Transverse colon (tissue), 4 donors: ENCODE measurements at regions of chr4 and their contacts with region 1.

Region 1: DNA sequence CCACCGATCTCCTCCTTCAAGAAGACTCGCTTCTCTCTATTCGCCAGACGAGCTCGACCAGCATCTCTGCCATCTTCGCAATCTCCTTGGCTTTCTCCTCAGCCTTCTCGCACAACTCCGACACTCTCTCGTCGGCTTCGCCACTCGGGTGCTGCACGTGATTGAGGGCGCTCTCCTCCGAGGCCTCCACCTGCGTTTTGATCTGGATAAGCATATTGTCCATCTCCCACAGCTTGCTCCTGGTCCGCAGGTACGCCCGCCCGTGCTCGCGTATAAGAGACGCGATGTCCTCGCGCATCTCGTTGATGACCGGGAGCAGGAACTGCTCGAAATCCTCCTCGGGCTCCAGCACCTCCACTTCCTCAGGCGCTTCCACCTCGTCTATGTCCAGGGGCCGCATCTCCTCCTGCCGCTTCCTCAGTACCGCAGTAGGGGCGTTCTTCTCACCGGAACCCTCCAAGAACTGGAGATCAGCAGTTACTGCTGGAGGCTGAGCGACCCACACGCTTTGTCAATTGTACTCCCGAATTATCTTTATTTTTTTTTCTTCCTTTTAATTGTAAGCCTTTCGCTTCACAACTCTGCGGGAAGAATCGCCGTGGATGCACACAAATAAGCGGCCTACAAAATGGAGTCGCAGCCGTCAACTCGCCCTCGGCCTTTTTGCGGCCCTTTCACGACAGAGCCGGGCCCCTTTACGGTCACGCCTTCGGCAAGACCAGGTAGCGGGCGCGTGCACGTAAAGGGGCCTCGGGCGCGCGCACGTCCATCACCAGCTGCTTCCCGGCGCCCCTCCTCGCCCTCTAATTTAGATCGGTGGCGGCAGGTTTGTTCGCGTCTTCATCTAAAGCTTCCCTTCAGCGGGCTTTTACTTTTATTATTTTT is at the start of gene MRFAP1L1:
- DNase-seq: peak; percentile 97
- H3K4me3 ChIP-seq: peak within 1 kb of the TSS; percentile 60 to 82 (median 74)
- H3K27ac ChIP-seq: peak within 1 kb of the TSS; percentile 83 to 92 (median 90)
- H3K4me1 ChIP-seq: peaks cover 25 to 42% (median 29%) of the 10 kb centered on the region in 4 donors
- H3K27me3 ChIP-seq: no peaks in the 10 kb centered on the region
- CTCF ChIP-seq: peak in 2 of 5 experiments; percentile 20 to 22
- EP300 ChIP-seq: no peak
- POLR2A ChIP-seq: peak; percentile 44
- total RNA-seq, gene MRFAP1L1: 18.3 to 51.0 (median 30.3) TPM

Region 2: DNA sequence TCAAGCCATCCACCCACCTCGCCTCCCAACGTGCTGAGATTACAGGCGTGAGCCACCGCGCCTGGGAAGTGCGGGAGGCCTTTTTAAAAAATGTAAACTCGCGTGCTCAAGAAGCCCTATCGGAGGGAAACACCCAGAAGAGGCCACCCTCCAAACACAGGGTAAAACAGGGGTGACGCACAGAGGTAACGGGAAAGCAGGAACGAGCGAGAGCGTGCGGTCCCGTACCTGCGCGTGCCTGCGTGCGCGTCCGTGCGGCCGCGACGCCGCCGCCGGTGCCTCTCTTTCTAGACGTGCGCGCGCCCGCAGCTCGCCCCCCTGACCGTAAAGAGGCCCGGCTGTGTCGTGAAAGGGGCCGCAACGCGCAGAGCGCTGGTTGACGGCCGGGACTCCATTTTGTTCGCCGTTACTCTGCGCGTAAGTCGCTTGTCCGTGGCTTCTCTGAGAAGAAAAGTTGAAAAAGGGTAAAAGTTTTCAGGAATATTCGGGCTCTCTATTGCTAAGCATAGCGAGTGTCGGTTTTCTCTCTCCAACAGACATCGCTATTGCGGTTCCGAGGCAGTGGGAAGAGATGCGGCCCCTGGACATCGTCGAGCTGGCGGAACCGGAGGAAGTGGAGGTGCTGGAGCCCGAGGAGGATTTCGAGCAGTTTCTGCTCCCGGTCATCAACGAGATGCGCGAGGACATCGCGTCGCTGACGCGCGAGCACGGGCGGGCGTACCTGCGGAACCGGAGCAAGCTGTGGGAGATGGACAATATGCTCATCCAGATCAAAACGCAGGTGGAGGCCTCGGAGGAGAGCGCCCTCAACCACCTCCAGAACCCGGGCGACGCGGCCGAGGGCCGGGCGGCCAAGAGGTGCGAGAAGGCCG is 68.9 kb before region 1 on chr4 and contains the start of gene MRFAP1:
- in situ Hi-C with region 1: no loop called
- intact Hi-C with region 1: loop called (anchors 10 kb)
- DNase-seq: peak; percentile 95
- H3K4me3 ChIP-seq: peak within 1 kb of the TSS; percentile 64 to 90 (median 73)
- H3K27ac ChIP-seq: peak within 1 kb of the TSS; percentile 96 to 98 (median 96)
- H3K4me1 ChIP-seq: peaks cover 10 to 28% (median 22%) of the 10 kb centered on the region in 4 donors
- H3K27me3 ChIP-seq: no peaks in the 10 kb centered on the region
- CTCF ChIP-seq: no peak
- EP300 ChIP-seq: no peak
- POLR2A ChIP-seq: peak; percentile 81
- total RNA-seq, gene MRFAP1: 96.3 to 229 (median 125) TPM

Region 3: DNA sequence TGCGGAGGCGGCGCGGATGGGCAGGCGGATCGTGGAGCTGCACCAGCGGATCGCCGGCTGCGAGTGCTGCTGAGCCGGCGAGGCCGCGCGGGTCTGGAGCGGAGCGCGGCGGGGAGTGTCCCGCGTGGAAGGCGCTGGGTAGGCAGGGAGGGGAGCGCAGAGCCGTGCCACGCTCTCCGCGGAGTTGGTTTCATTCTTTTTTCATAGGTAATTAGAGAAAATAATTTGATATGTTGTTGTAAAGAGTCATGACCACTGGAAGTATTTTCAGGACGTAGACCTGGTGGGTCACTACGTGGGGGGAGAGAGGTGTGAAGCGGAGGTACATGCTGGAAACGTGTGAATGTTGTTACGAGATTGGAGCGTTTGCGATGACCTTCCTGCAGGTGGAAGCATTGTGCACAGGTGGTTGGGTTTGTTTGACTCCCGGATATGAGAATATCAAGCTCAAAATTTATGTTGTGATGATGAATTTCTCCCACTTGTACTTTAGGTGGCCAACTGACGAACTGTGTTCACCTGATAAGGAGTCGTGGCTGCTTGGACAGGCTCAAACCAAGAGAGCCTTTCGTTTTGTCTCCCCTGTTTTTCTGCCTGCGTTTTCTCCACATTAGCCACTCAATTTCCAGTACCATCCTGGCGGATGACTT is 34.8 kb before region 1 on chr4:
- in situ Hi-C with region 1: loop called in 1 of 4 experiments (anchors 5 kb)
- intact Hi-C with region 1: no loop called
- DNase-seq: peak; percentile 64
- H3K4me3 ChIP-seq: peak overlapping the region; percentile 48 to 77 (median 68)
- H3K27ac ChIP-seq: peak overlapping the region; percentile 88 to 95 (median 91)
- H3K4me1 ChIP-seq: peaks cover 21 to 40% (median 26%) of the 10 kb centered on the region in 4 donors
- H3K27me3 ChIP-seq: no peaks in the 10 kb centered on the region
- CTCF ChIP-seq: peak; percentile 43 to 66 (median 45)
- EP300 ChIP-seq: no peak
- POLR2A ChIP-seq: no peak

Region 4: GRCh38 chr4:6885951-6886557 is 176.6 kb after region 1 on chr4:
- in situ Hi-C with region 1: loop called in 1 of 4 experiments (anchors 25 kb)
- intact Hi-C with region 1: no loop called
- DNase-seq: no peak
- H3K4me3 ChIP-seq: no peak overlapping the region
- H3K27ac ChIP-seq: peak overlapping the region in 3 of 4 donors; percentile 34 to 55 (median 34)
- H3K4me1 ChIP-seq: peaks cover 0 to 10% (median 7%) of the 10 kb centered on the region in 4 donors
- H3K27me3 ChIP-seq: no peaks in the 10 kb centered on the region
- CTCF ChIP-seq: peak in 1 of 5 experiments; percentile 18
- EP300 ChIP-seq: no peak
- POLR2A ChIP-seq: no peak

Region 5: DNA sequence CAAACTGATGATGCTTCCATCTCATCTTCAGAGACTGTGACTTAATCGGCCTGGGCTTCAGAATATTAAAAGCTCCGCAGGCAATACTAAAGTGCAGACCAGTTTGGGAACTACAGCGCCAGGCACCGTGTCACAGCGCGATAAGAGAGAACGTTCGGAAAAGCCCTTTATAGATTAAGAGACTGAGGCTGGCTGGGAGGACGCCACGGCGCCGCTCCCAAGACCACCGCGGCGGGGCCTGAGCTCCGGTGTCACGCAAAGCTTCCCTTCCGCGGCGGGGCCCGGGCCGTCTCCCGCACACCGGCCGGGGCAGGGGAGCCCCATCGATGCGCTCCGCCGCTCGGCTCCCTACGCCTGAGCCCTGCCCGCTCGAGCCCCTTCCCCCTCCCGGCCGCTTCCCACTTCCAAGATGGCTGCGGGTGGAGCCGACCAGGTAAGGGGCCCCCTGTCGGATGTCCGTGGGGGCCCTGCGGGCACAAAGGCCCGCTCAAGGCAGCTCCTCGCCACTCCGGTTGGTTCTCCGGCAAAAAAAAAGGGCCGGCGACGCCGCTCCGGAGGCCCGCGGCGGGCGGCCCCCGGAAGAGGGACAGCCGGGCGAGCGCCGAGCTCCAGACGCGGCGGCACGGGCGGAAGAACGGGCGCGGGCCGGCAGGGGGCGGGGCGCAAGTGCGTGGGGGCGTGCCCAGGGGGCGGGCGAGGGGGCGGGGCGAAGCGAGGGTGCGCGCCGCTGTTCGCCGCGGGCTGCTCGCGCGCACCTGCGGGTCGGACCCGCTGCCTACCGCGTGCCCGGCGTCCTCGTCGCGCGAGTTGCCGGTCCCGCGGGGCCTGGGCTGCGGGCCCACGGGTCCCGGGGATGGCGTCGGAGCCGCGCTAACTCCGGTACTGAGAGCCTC is 199.8 kb after region 1 on chr4 and contains the start of gene TBC1D14:
- in situ Hi-C with region 1: no loop called
- intact Hi-C with region 1: loop called (anchors 10 kb)
- DNase-seq: peak; percentile 91
- H3K4me3 ChIP-seq: peak within 1 kb of the TSS; percentile 75 to 91 (median 86)
- H3K27ac ChIP-seq: peak within 1 kb of the TSS; percentile 97 to 99 (median 99)
- H3K4me1 ChIP-seq: peaks cover 6 to 49% (median 34%) of the 10 kb centered on the region in 4 donors
- H3K27me3 ChIP-seq: peaks cover 3% of the 10 kb centered on the region
- CTCF ChIP-seq: peak in 3 of 5 experiments; percentile 8 to 44 (median 15)
- EP300 ChIP-seq: no peak
- POLR2A ChIP-seq: peak; percentile 62
- total RNA-seq, gene TBC1D14: 42.6 to 56.9 (median 54.0) TPM